RWPE1 (cell line): ENCODE measurements at regions of chr20 and their contacts with region 1.

Region 1: GRCh38 chr20:16801919-16802911 is 54.1 kb downstream of the OTOR start:
- DNase-seq: peak; percentile 49
- H3K27ac ChIP-seq: no peak overlapping the region
- CTCF ChIP-seq: peak; percentile 97

Region 2: DNA sequence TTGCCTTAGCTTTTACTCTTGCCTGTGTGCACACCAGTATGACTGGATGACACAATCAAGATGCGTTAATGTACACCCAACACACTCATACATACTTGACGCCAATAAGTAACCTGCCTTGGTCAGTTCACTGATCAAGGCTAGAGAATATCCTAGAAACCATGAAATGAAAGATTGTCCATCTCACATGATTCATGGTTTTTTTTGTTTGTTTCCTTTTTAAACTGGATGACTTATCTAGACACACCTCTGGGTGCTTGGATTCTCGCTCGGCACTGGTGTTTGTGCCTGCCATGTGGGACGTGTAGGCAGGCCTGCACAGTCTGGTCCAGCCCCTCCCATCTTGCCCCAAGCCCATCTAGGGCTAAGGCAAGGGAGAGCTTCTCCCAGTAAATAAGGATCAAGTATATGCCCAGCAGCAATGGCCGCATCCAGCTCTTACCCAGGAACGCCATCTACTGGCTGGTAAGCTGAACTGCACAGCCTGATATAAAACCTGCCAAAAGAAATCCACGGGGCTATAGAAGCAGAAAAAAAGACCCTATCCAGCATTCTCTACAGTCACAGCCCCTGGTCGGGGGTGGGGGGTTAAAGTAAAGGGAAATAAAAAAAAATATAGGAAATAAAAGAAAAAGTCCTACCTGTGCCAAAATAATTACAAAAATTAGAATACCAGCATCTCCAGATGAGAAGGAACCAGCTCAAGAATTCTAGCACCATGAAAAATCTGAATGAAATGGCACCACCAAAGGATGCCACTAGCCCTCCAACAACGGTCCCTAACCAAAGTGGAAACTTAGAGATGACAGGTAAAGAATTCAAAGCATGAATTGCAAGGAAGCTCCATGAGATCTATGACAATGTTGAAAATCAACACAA is 19.2 kb after region 1 on chr20:
- CTCF ChIA-PET with region 1: interaction called, 10 read pairs
- POLR2A ChIA-PET with region 1: no interaction called
- DNase-seq: peak; percentile 39
- H3K27ac ChIP-seq: no peak overlapping the region
- CTCF ChIP-seq: peak; percentile 96

Region 3: GRCh38 chr20:17431621-17432364 is 629.6 kb after region 1 on chr20:
- CTCF ChIA-PET with region 1: interaction called, 123 read pairs
- POLR2A ChIA-PET with region 1: no interaction called
- DNase-seq: peak; percentile 62
- H3K27ac ChIP-seq: no peak overlapping the region
- CTCF ChIP-seq: peak; percentile 95